OCI-LY7 (cell line): ENCODE measurements at regions of chr2 and their contacts with region 1.

Region 1: GRCh38 chr2:85602476-85603234 is at the start of gene TMEM150A:
- DNase-seq: peak; percentile 92
- H3K4me3 ChIP-seq: peak within 1 kb of the TSS; percentile 72
- H3K27ac ChIP-seq: no peak within 1 kb of the TSS
- H3K4me1 ChIP-seq: peaks cover 19% of the 10 kb centered on the region
- CTCF ChIP-seq: peak; percentile 53
- total RNA-seq, gene TMEM150A: 0.92 TPM in 1 of 2 replicates, not detected in the other

Region 2: DNA sequence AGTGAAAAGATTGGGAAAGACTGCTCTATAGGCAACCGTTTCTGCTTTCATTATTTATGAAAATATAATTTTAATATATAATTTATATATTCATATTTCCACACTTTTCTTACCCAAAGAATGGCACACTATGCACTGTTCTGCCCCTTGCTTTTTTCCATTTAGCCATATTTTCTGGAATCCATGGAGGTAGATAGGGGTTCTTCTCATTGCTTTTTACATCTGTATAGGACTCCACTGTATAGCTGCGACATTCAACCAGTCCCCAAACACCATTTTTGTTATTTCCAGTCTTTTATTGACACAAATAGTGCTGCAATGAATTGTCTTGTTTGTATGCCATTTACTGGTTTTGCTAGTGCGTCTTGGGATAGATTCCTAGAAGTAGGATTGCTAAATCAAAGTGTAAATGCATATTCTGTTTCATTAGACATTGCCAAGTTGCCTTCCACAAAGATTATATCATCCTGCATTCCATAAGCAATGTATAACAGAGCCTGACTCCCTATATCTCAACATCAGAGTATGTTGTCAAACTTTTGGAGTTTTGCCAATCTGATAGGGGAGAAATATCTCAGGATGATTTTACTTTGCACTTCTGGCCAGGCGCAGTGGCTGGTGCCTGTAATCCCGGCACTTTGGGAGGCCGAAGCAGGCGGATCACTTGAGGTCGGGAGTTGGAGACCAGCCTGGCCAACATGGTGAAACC is 496.0 kb before region 1 on chr2:
- CTCF ChIA-PET with region 1: no interaction called
- POLR2A ChIA-PET with region 1: no interaction called
- intact Hi-C with region 1: no loop called
- DNase-seq: no peak
- H3K4me3 ChIP-seq: no peak overlapping the region
- H3K27ac ChIP-seq: no peak overlapping the region
- H3K4me1 ChIP-seq: no peaks in the 10 kb centered on the region
- CTCF ChIP-seq: no peak

Region 3: DNA sequence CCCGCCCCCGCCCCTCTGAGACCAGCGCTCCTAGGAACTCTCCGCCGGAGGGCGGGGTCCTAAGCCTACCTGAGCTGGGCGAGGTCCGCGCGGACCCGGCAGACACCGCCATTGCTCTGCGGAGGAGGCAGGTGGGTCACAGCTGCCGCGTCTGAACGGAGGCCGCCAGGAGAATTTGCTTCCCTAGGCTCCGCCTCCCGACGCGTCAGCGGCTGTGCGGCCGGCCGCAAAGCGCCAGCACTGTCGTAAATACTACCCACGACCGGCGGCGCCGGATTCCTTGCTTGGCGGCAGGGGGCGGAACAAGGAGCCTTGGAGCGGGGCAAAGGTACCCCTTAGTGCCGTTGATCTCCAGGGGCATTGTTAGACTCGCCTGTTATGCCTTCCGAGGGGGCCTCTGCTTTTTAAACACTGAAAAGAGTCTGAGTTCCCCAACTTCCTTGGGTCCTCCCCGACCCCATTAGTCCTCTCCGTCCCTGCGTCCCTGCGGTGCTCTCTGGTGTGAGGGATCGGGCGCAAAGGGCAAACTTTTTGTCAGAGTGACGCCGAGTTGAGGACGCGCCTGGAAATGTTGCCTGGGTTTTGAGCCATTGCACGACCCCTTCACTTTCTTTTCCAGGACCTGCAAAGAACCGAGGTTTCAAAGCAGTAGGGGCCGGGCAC is 41.2 kb before region 1 on chr2 and contains the start of gene GGCX:
- CTCF ChIA-PET with region 1: no interaction called
- POLR2A ChIA-PET with region 1: no interaction called
- intact Hi-C with region 1: loop called (anchors 2 kb)
- DNase-seq: peak; percentile 98
- H3K4me3 ChIP-seq: peak within 1 kb of the TSS; percentile 79
- H3K27ac ChIP-seq: peak within 1 kb of the TSS; percentile 65
- H3K4me1 ChIP-seq: peaks cover 30% of the 10 kb centered on the region
- CTCF ChIP-seq: no peak
- total RNA-seq, gene GGCX: 16.5 and 33.3 TPM in 2 replicates